ENCODE measurements at regions of chr2 and their contacts with region 1.

Region 1: GRCh38 chr2:141824790-141825189 is 306.0 kb downstream of the LRP1B start:
- DNase-seq: no peak
- CTCF ChIP-seq: no peak

Region 2: GRCh38 chr2:141601249-141602152 is 223.3 kb before region 1 on chr2:
- CTCF ChIA-PET with region 1: no interaction called
- POLR2A ChIA-PET with region 1: no interaction called
- DNase-seq: no peak
- CTCF ChIP-seq: no peak

Region 3: GRCh38 chr2:141814150-141814549 is 10.6 kb before region 1 on chr2:
- CTCF ChIA-PET with region 1: interaction called, 14 read pairs
- POLR2A ChIA-PET with region 1: no interaction called
- DNase-seq: no peak
- CTCF ChIP-seq: no peak

Measured in GM10248 (cell line).